ENCODE measurements at regions of chr11 and their contacts with region 1.

Region 1: DNA sequence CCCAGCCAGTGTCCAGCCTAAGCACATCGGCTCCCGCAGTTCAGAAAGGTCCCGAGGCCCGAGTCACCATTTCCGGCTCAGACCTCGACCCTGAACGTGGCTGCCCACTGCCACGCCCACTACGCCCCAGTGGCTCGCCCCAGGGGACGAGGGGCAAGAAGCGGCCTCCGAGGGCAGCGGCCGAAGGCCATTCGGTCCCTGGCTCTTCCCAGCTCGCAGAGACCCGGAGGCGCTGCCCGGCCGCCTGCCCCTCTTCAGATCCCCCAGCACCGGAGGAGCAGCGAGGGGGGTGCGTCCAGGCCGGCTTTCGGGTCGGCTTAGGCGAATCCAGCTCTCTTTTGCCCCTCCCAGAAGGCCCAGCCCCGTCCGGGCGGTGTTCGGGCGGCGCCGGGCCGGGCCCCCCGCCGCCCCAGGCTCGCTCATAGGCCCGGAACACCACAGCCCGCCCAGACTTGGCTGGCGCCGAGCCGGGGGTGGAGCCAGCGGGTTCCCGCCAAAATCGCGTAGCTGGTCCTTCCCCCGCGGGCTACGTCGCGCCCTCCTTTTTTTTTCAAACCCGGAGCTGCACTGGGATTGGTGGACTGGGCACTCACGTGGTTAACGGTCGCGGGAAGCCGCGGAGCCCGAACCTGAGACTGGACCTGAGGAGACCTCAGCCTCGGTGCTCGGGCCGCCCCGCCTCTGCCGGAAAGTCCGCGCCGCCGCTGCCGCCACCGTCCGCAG is at the start of gene WEE1:
- DNase-seq: peak; percentile 99
- H3K4me3 Mint-ChIP-seq: peak within 1 kb of the TSS; percentile 93
- H3K27ac Mint-ChIP-seq: peak within 1 kb of the TSS; percentile 77
- H3K4me1 Mint-ChIP-seq: peaks cover 27% of the 10 kb centered on the region
- H3K27me3 Mint-ChIP-seq: peaks cover 10% of the 10 kb centered on the region
- total RNA-seq, gene WEE1: 41.8 to 46.6 TPM

Region 2: DNA sequence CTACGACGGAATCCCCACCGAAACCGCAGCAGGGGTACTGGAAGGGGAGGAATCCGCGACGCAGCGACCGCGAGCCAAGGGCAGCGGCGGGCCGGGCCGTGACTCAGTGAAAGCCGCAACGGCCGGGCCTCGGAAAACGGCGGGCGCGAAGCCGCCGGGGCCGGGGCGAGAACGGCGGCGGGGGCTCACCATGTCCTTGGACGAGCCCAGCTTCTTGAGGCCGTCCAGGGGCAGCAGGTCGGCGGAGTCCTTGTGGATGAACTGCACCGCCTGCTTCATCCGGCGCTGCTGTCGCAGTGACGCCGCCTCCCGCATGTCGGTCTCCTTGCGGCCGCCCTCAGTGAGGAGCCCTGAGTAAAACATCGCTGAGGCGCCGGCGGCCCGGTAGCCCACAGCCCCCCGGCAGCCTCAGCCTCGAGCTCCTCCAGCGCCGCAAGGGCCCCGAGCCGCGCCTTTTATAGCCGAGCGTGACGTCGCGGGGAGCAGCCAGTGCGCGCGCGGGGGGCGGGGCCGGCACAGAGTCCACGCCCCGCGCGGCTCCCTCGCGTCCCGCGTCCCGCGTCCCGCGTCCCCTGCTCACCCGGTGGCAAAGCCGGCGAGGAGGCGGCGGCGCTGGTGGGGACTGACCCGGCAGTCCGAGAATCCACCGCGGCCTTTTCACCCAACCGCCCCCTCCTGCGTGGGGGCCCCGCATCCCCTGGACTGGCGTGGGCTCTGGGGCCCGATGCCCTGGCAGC is 569.5 kb before region 1 on chr11 and contains the start of gene NRIP3:
- CTCF ChIA-PET with region 1: no interaction called
- intact Hi-C with region 1: loop called (anchors 5 kb)
- DNase-seq: peak; percentile 67
- H3K4me3 Mint-ChIP-seq: peak within 1 kb of the TSS; percentile 68
- H3K27ac Mint-ChIP-seq: no peak within 1 kb of the TSS
- H3K4me1 Mint-ChIP-seq: peaks cover 24% of the 10 kb centered on the region
- H3K27me3 Mint-ChIP-seq: peaks cover 33% of the 10 kb centered on the region
- total RNA-seq, gene NRIP3: 3.0 to 3.5 TPM

Region 3: GRCh38 chr11:9210922-9211320 is 362.3 kb before region 1 on chr11:
- CTCF ChIA-PET with region 1: no interaction called
- intact Hi-C with region 1: loop called (anchors 5 kb)
- DNase-seq: peak; percentile 73
- H3K4me3 Mint-ChIP-seq: no peak overlapping the region
- H3K27ac Mint-ChIP-seq: peak overlapping the region; percentile 82
- H3K4me1 Mint-ChIP-seq: peaks cover 68% of the 10 kb centered on the region
- H3K27me3 Mint-ChIP-seq: no peaks in the 10 kb centered on the region

Region 4: DNA sequence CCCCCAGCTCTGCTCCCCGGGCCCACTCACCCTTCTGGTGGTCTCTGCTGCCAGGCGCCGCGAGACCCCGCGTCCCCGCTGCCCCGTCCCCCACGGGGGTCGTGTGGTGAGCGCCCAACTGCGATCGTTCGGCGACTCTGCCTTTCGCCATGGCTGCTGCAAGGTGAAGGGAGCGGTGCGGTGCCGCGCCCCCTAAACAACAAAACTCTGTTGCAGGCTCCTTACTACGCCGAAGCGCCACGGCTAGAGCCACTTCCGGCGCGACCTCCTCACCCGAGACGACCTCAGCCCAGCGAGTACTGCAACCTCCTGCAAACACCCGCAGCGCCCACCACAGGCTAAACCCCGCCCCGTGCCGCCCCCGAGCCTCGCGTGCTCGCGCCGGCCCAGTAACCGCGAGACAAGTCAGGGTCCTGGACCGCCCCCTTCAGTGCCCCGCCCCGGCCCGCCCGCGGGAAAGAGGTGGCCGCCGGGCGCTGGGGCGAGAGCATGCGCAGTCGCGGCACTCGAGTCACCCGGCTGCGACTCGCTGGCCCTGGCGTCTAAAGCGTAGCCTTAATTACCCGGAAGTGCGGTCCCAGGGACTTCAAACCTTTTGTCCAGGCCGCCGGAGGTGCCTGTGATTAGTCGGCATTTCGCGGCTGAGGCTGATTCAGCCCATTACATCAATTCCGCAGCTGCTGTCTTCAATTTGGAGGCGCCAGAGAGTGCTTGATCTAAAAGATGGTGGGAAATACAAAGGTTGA is 258.7 kb before region 1 on chr11 and contains the start of gene TMEM41B:
- CTCF ChIA-PET with region 1: no interaction called
- intact Hi-C with region 1: loop called (anchors 2 kb)
- DNase-seq: peak; percentile 99
- H3K4me3 Mint-ChIP-seq: peak within 1 kb of the TSS; percentile 99
- H3K27ac Mint-ChIP-seq: peak within 1 kb of the TSS; percentile 92
- H3K4me1 Mint-ChIP-seq: peaks cover 37% of the 10 kb centered on the region
- H3K27me3 Mint-ChIP-seq: peaks cover 13% of the 10 kb centered on the region
- total RNA-seq, gene TMEM41B: 27.8 to 30.5 TPM

Region 5: DNA sequence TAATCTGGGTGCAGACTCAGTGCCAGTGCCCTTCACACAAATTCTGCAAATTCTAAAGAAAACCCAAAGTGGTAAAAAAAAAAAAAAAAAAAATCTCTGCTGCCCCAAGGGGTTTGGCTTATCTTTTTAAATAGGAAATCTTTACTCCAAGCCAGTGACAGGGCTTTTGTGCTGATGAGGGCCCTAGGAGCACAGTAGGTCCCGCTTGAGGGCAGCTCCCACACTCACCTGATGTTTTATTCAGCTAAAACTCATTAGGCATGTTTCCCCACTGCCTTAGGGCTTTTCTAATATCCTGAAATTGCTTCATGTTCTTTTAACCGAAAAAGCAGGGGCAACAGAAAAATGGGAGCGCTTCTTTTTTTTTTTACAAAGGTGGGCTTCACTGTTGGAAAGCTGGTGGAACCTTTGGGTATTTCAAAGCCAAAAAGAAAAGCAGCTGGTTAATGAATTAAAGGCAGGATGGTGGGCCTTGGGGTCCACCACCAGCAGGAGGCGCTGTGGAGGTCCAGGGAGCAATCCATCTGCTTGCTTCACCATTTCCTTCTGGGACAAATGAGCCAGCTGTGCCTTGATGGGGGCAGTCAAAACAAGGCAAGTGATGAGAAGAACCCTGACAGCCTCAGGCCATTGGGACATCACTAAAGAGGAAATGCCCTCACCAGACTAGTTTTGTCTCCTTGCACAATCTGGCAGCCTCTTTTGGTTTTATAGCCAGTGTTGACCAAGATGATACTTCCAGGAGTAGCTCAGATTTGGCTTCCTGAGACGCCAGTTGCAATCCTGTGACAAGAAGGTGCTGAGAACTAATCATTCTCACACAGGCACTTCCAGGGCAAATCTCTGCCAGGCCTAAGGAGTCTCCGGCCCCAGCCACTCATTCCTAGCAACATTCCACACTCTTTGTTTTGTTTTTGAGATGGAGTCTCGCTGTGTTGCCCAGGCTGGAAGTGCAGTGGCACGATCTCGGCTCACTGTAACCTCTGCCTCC is 38.1 kb before region 1 on chr11:
- CTCF ChIA-PET with region 1: interaction called, 7 read pairs
- intact Hi-C with region 1: loop called (anchors 1 kb)
- DNase-seq: peak; percentile 87
- H3K4me3 Mint-ChIP-seq: no peak overlapping the region
- H3K27ac Mint-ChIP-seq: no peak overlapping the region
- H3K4me1 Mint-ChIP-seq: no peaks in the 10 kb centered on the region
- H3K27me3 Mint-ChIP-seq: no peaks in the 10 kb centered on the region

Region 6: DNA sequence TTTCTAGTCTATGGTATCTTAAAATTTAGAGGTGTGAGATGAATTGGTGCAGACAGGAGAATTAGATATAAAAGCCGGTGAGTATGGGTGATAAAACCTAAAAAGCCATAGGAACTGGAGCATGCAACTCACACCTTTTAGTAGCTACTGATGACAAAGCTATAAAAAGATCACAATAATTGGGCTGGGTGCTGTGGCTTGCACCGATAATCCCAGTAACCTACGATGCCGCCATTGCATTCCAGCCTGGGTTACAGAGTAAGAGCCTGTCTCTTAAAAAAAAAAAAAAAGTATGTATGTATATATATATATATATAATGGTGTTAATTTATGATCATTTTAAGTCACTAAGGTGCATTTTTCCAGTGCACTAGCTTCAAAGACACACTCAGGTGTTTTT is 17.5 kb after region 1 on chr11:
- CTCF ChIA-PET with region 1: interaction called, 6 read pairs
- intact Hi-C with region 1: loop called (anchors 2 kb)
- DNase-seq: no peak
- H3K4me3 Mint-ChIP-seq: no peak overlapping the region
- H3K27ac Mint-ChIP-seq: no peak overlapping the region
- H3K4me1 Mint-ChIP-seq: peaks cover 4% of the 10 kb centered on the region
- H3K27me3 Mint-ChIP-seq: no peaks in the 10 kb centered on the region

Region 7: GRCh38 chr11:9601037-9601875 is 28.0 kb after region 1 on chr11:
- CTCF ChIA-PET with region 1: interaction called, 6 read pairs
- intact Hi-C with region 1: loop called (anchors 1 kb)
- DNase-seq: peak; percentile 90
- H3K4me3 Mint-ChIP-seq: peak overlapping the region; percentile 67
- H3K27ac Mint-ChIP-seq: peak overlapping the region; percentile 84
- H3K4me1 Mint-ChIP-seq: peaks cover 27% of the 10 kb centered on the region
- H3K27me3 Mint-ChIP-seq: peaks cover 2% of the 10 kb centered on the region